ENCODE measurements at regions of chr1 and their contacts with region 1.

Region 1: GRCh38 chr1:40662864-40663263 is 2.6 kb downstream of the RIMS3 start:
- DNase-seq: no peak
- ATAC-seq: no peak
- H3K4me3 Mint-ChIP-seq: no peak overlapping the region
- H3K27ac Mint-ChIP-seq: peak overlapping the region; percentile 3
- H3K4me1 Mint-ChIP-seq: peaks cover 31% of the 10 kb centered on the region
- H3K27me3 Mint-ChIP-seq: no peaks in the 10 kb centered on the region
- CTCF ChIP-seq: no peak

Region 2: GRCh38 chr1:40226192-40226591 is 436.7 kb before region 1 on chr1:
- CTCF ChIA-PET with region 1: no interaction called
- POLR2A ChIA-PET with region 1: interaction called, 11 read pairs
- intact Hi-C with region 1: no loop called
- DNase-seq: no peak
- ATAC-seq: no peak
- H3K4me3 Mint-ChIP-seq: no peak overlapping the region
- H3K27ac Mint-ChIP-seq: no peak overlapping the region
- H3K4me1 Mint-ChIP-seq: no peaks in the 10 kb centered on the region
- H3K27me3 Mint-ChIP-seq: no peaks in the 10 kb centered on the region
- CTCF ChIP-seq: no peak

Measured in activated B cell treated with CpG ODN at 0.5 μM for 24 hours (primary cell).